ENCODE measurements at regions of chr7 and their contacts with region 1.

Region 1: GRCh38 chr7:26200444-26201246 is at the start of gene HNRNPA2B1:
- DNase-seq: peak; percentile 95 to 99 (median 98)
- ATAC-seq: peak; percentile 72
- H3K4me3 ChIP-seq: peak within 1 kb of the TSS; percentile 74
- H3K4me3 Mint-ChIP-seq: peak within 1 kb of the TSS; percentile 92
- H3K27ac ChIP-seq: peak within 1 kb of the TSS; percentile 98
- H3K27ac Mint-ChIP-seq: peak within 1 kb of the TSS; percentile 99
- H3K4me1 ChIP-seq: peaks cover 22% of the 10 kb centered on the region
- H3K4me1 Mint-ChIP-seq: peaks cover 55% of the 10 kb centered on the region
- H3K27me3 ChIP-seq: no peaks in the 10 kb centered on the region
- H3K27me3 Mint-ChIP-seq: peaks cover 7% of the 10 kb centered on the region
- CTCF ChIP-seq: no peak
- total RNA-seq, gene HNRNPA2B1: 282 to 299 TPM

Region 2: GRCh38 chr7:25125137-25125946 is 1075.3 kb before region 1 on chr7 and contains the start of gene CYCS:
- CTCF ChIA-PET with region 1: no interaction called
- POLR2A ChIA-PET with region 1: interaction called, 13 read pairs
- intact Hi-C with region 1: no loop called
- DNase-seq: peak; percentile 99 to 100 (median 99)
- ATAC-seq: peak; percentile 90
- H3K4me3 ChIP-seq: peak within 1 kb of the TSS; percentile 92
- H3K4me3 Mint-ChIP-seq: peak within 1 kb of the TSS; percentile 99
- H3K27ac ChIP-seq: peak within 1 kb of the TSS; percentile 92 to 94
- H3K27ac Mint-ChIP-seq: peak within 1 kb of the TSS; percentile 99
- H3K4me1 ChIP-seq: peaks cover 14% of the 10 kb centered on the region
- H3K4me1 Mint-ChIP-seq: peaks cover 40% of the 10 kb centered on the region
- H3K27me3 ChIP-seq: no peaks in the 10 kb centered on the region
- H3K27me3 Mint-ChIP-seq: no peaks in the 10 kb centered on the region
- CTCF ChIP-seq: no peak
- total RNA-seq, gene CYCS: 126 to 131 TPM

Region 3: DNA sequence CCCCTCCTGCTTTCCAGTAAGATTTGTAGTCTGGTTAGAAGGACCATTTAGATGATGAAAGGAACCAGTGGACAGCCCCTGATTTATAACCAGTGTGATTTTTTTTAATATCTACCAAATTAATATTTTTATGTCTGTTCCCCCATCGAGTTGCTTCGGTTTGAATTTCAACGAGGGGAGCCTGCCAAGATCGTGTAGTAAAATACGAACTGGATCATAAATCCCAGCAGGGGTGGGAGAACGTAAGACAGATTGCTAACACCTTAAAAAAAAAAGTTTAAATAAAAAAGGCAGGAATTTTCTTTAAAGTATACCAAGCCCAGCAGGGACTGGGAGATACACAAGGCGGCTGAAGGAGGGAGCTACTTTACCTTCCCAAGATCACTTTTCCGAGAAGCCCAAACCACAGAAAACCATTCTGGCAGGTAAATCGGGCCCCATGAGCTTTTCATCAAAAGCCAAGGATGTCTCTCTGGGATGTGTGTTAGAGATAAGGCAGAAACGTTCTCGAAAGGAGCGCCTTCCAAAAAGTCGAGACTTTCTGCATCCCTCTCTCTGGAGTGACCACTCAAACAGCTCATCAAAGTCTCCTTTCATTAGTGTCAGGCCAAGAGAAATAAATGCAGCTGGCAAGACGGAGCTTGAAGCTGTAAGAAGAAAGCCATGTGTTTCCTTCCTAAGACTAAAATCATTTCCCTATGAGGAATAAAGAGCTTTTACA is 319.2 kb before region 1 on chr7:
- CTCF ChIA-PET with region 1: no interaction called
- POLR2A ChIA-PET with region 1: no interaction called
- intact Hi-C with region 1: no loop called
- DNase-seq: no peak
- ATAC-seq: no peak
- H3K4me3 ChIP-seq: no peak overlapping the region
- H3K4me3 Mint-ChIP-seq: no peak overlapping the region
- H3K27ac ChIP-seq: no peak overlapping the region
- H3K27ac Mint-ChIP-seq: no peak overlapping the region
- H3K4me1 ChIP-seq: no peaks in the 10 kb centered on the region
- H3K4me1 Mint-ChIP-seq: no peaks in the 10 kb centered on the region
- H3K27me3 ChIP-seq: peaks cover 11 to 22% of the 10 kb centered on the region in 2 experiments
- H3K27me3 Mint-ChIP-seq: peaks cover 76% of the 10 kb centered on the region
- CTCF ChIP-seq: no peak

Region 4: GRCh38 chr7:26078437-26079336 is 122.0 kb before region 1 on chr7:
- CTCF ChIA-PET with region 1: interaction called, 13 read pairs
- POLR2A ChIA-PET with region 1: interaction called, 10 read pairs
- intact Hi-C with region 1: loop called in 1 of 2 experiments (anchors 2 kb)
- DNase-seq: peak; percentile 69 to 89 (median 80)
- ATAC-seq: peak; percentile 100
- H3K4me3 ChIP-seq: no peak overlapping the region
- H3K4me3 Mint-ChIP-seq: no peak overlapping the region
- H3K27ac ChIP-seq: no peak overlapping the region
- H3K27ac Mint-ChIP-seq: no peak overlapping the region
- H3K4me1 ChIP-seq: peaks cover 4% of the 10 kb centered on the region
- H3K4me1 Mint-ChIP-seq: peaks cover 11% of the 10 kb centered on the region
- H3K27me3 ChIP-seq: peaks cover 5 to 26% of the 10 kb centered on the region in 2 experiments
- H3K27me3 Mint-ChIP-seq: peaks cover 48% of the 10 kb centered on the region
- CTCF ChIP-seq: peak; percentile 80

Region 5: GRCh38 chr7:26151953-26152781 is 48.5 kb before region 1 on chr7 and contains the start of gene NFE2L3:
- CTCF ChIA-PET with region 1: interaction called, 18 read pairs
- POLR2A ChIA-PET with region 1: interaction called, 146 read pairs
- intact Hi-C with region 1: loop called (anchors 1 to 2 kb)
- DNase-seq: peak; percentile 60 to 93 (median 76)
- ATAC-seq: peak; percentile 81
- H3K4me3 ChIP-seq: peak within 1 kb of the TSS; percentile 69
- H3K4me3 Mint-ChIP-seq: peak within 1 kb of the TSS; percentile 96
- H3K27ac ChIP-seq: peak within 1 kb of the TSS; percentile 31 to 63
- H3K27ac Mint-ChIP-seq: peak within 1 kb of the TSS; percentile 80
- H3K4me1 ChIP-seq: peaks cover 54% of the 10 kb centered on the region
- H3K4me1 Mint-ChIP-seq: peaks cover 51% of the 10 kb centered on the region
- H3K27me3 ChIP-seq: no peaks in the 10 kb centered on the region
- H3K27me3 Mint-ChIP-seq: no peaks in the 10 kb centered on the region
- CTCF ChIP-seq: no peak
- total RNA-seq, gene NFE2L3: 0.45 to 0.93 TPM

Region 6: GRCh38 chr7:26365077-26365900 is 164.6 kb after region 1 on chr7:
- CTCF ChIA-PET with region 1: interaction called, 7 read pairs
- POLR2A ChIA-PET with region 1: interaction called, 20 read pairs
- intact Hi-C with region 1: loop called (anchors 2 to 5 kb)
- DNase-seq: peak; percentile 16 to 84 (median 34)
- ATAC-seq: peak; percentile 86
- H3K4me3 ChIP-seq: no peak overlapping the region
- H3K4me3 Mint-ChIP-seq: no peak overlapping the region
- H3K27ac ChIP-seq: no peak overlapping the region
- H3K27ac Mint-ChIP-seq: no peak overlapping the region
- H3K4me1 ChIP-seq: peaks cover 2% of the 10 kb centered on the region
- H3K4me1 Mint-ChIP-seq: peaks cover 13% of the 10 kb centered on the region
- H3K27me3 ChIP-seq: no peaks in the 10 kb centered on the region
- H3K27me3 Mint-ChIP-seq: no peaks in the 10 kb centered on the region
- CTCF ChIP-seq: peak; percentile 83

Region 7: DNA sequence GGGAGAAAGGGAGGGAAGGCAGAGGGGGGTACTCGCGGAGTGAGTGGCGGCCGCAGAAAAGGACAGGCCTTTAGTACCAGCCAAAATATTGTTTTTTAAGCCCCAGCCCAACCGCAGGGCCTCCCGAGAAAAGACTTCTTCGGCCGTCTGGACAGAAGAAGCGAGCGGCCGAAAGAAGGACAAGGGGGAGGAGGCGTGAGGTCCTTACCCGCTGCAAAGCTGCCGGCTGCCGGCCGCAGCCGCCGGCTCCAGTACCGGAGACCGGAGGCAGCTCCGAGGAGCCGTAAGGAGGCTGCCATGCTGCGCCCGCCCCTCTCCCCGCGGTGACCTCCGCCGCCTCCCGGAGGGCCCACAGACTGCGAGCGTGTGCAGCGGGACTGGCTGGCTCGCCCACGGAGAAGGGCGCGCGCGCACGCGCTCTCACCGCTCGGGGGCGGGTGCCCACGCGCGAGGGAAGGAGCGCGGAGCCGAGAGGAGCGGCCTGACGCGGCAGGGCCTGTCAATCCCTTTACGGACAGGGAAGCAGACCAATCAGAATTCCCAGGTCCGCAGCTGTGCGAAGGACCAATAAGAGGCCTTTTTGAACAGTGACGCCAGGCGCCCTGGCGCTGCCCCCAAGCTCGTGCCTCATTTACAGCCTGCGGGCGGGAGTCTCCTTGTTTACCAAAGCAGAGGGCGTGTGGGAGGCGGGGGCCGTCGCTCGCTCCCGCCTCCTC is 1462.0 kb after region 1 on chr7 and contains the start of gene HIBADH:
- CTCF ChIA-PET with region 1: no interaction called
- POLR2A ChIA-PET with region 1: interaction called, 3 read pairs
- intact Hi-C with region 1: loop called in 1 of 2 experiments (anchors 5 kb)
- DNase-seq: peak; percentile 89 to 99 (median 95)
- ATAC-seq: peak; percentile 94
- H3K4me3 ChIP-seq: peak within 1 kb of the TSS; percentile 98
- H3K4me3 Mint-ChIP-seq: peak within 1 kb of the TSS; percentile 93
- H3K27ac ChIP-seq: peak within 1 kb of the TSS; percentile 50 to 83
- H3K27ac Mint-ChIP-seq: peak within 1 kb of the TSS; percentile 99
- H3K4me1 ChIP-seq: peaks cover 16% of the 10 kb centered on the region
- H3K4me1 Mint-ChIP-seq: peaks cover 20% of the 10 kb centered on the region
- H3K27me3 ChIP-seq: no peaks in the 10 kb centered on the region
- H3K27me3 Mint-ChIP-seq: no peaks in the 10 kb centered on the region
- CTCF ChIP-seq: peak; percentile 19
- total RNA-seq, gene HIBADH: 6.3 to 8.4 TPM